ENCODE measurements at regions of chrX and their contacts with region 1.

Region 1: DNA sequence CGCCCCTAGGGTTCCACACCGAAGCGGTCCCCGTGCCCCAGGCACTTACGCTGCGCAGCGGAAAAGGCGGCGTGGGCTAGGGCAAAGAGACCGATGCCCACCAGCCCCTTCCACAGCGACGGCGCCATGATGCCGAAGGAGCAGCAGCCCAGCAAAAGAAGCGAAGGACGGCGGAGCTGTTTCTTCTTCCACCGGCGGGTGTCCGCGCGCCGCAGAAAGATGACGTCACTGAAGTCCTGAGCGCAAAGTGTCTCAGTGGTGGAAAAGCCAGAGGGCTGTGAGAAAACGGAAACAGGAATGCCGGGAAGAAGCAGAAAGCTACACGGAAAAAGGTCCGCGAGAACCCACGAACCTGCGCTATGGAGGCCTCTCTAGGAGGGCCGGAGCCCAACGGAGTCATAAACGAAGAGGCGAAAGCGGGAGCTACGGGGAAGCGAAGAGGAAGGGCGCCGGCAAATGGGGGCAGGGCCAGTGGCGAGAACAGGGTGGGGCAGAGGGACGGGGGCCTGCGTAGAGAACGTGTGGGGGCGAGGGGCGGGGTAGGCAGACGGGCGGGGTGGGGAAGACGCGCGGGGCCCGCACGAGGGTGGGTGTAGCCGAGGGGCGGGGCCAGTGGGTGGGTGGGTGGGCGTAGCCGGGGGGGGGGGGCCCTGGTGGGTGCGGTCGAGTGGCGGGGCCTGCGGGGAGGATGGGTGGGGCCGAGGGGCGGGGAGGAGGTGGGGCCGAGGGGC is at the start of gene MMGT1:
- DNase-seq: peak; percentile 95
- H3K4me3 ChIP-seq: peak within 1 kb of the TSS; percentile 63 to 82 (median 68)
- H3K27ac ChIP-seq: peak within 1 kb of the TSS; percentile 89 to 93 (median 92)
- H3K4me1 ChIP-seq: peaks cover 6 to 28% (median 21%) of the 10 kb centered on the region in 4 donors
- H3K27me3 ChIP-seq: peaks cover 0 to 4% (median 0%) of the 10 kb centered on the region in 4 donors
- CTCF ChIP-seq: peak in 1 of 3 experiments; percentile 25
- EP300 ChIP-seq: no peak
- POLR2A ChIP-seq: no peak
- total RNA-seq, gene MMGT1: 29.0 to 37.8 (median 35.3) TPM

Region 2: GRCh38 chrX:136112778-136113177 is 139.1 kb after region 1 on chrX:
- intact Hi-C with region 1: no loop called
- DNase-seq: no peak
- H3K4me3 ChIP-seq: no peak overlapping the region
- H3K27ac ChIP-seq: peak overlapping the region in 3 of 4 donors; percentile 30 to 47 (median 37)
- H3K4me1 ChIP-seq: peaks cover 0 to 27% (median 19%) of the 10 kb centered on the region in 4 donors
- H3K27me3 ChIP-seq: no peaks in the 10 kb centered on the region
- CTCF ChIP-seq: no peak
- EP300 ChIP-seq: no peak
- POLR2A ChIP-seq: no peak

Region 3: DNA sequence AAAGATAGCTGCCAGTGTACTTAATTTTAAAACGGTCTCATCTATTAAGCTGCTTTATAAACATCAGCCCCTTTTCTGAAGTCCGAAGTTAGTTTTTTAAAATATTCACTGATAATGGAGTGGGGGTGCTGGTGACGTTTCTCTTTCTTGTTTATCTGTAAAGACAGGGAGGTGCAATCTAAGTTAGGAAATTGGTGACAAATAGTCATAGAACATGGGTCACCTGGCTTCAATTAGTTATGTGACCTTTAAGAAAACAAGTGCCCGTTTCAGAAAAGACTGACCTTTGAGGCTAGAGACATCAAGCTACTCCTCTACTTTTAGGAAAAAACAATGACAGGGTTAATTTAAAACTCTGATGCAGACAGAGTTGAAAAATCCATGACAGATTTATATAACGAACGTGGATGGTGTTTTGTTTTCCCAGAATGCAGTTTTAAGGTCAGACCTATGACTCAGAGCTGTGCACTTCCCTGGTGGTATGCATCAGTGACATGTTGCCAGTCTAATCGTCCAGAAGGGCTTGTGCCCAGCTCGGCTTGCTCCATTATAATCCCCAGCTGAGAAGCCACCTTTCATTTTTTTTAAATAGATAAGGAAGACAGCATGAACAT is 211.8 kb after region 1 on chrX:
- intact Hi-C with region 1: no loop called
- DNase-seq: no peak
- H3K4me3 ChIP-seq: peak overlapping the region in 3 of 4 donors; percentile 12 to 20 (median 17)
- H3K27ac ChIP-seq: peak overlapping the region; percentile 84 to 99 (median 96)
- H3K4me1 ChIP-seq: peaks cover 43 to 86% (median 65%) of the 10 kb centered on the region in 4 donors
- H3K27me3 ChIP-seq: no peaks in the 10 kb centered on the region
- CTCF ChIP-seq: no peak
- EP300 ChIP-seq: peak; percentile 22
- POLR2A ChIP-seq: no peak

Region 4: DNA sequence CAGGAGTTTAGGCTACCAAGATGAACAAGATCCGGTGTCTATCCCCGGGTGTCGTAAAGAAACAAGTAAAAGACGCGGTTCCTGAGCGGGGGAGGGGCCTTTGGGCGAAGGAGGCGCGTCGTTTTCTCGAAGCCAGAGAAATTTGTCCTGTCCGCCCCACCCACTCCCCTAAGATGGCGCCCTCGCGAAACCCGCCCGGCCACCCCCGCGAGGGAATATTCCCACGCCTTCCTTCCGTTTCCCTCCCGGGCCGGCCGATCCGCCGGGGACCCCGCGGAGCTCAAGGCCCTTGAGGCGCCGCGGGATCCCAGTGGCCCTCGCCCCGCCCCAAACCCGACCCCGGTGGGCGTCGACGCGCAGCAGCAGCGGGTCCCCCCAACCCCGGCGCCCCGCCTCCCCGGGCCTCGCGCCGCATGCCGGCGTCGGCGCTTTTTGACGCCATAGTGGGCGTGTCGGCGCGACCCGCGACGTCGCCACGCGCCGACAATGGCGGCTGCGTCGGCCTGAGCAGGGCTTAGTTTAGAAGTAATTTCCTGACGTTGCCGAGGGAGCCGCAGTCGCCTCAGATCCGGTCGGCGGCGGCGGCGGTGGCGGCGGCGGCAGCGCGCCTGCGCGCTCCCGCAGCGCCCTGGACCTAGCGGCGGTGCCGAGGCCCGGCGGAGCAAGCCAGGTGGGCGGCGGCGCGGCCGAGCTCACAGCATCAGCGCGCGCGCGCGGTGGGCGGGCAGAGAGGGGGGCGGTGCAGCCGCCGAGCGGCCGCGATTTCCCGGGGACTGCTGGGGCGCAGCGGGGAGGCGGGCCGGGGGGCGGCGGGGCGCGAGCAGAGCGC is 523.3 kb after region 1 on chrX and contains the start of gene HTATSF1:
- intact Hi-C with region 1: loop called (anchors 5 kb)
- DNase-seq: peak; percentile 95
- H3K4me3 ChIP-seq: peak within 1 kb of the TSS; percentile 61 to 69 (median 66)
- H3K27ac ChIP-seq: peak within 1 kb of the TSS; percentile 86 to 95 (median 94)
- H3K4me1 ChIP-seq: peaks cover 3 to 24% (median 15%) of the 10 kb centered on the region in 4 donors
- H3K27me3 ChIP-seq: peaks cover 0 to 7% (median 0%) of the 10 kb centered on the region in 4 donors
- CTCF ChIP-seq: no peak
- EP300 ChIP-seq: no peak
- POLR2A ChIP-seq: no peak
- total RNA-seq, gene HTATSF1: 47.7 to 59.8 (median 55.4) TPM